ENCODE measurements at regions of chr17 and their contacts with region 1.

Region 1: DNA sequence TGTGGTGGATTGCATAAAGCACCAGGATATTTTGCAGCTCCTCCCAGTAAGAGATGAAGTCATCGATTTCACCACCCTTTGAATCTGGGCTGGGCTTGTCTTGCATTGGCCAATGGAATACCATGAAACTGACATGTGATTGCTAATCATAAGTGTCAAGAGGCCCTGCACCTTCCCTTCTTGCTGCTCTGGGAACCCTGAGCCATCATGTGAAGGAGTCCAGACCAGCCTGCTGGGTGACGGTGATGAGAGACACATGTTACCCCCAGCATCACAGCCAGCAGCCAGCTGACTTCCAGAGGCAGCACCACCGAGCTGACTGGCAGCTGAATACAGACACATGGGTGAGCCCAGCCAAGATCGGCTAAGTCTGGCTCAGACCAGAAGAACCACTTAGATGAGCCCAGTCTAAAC is 43.6 kb upstream of the CACNG4 start:
- DNase-seq: no peak
- ATAC-seq: no peak
- H3K4me3 Mint-ChIP-seq: no peak overlapping the region
- H3K27ac Mint-ChIP-seq: no peak overlapping the region
- H3K4me1 Mint-ChIP-seq: no peaks in the 10 kb centered on the region
- H3K27me3 Mint-ChIP-seq: peaks cover 12% of the 10 kb centered on the region
- CTCF ChIP-seq: no peak

Region 2: DNA sequence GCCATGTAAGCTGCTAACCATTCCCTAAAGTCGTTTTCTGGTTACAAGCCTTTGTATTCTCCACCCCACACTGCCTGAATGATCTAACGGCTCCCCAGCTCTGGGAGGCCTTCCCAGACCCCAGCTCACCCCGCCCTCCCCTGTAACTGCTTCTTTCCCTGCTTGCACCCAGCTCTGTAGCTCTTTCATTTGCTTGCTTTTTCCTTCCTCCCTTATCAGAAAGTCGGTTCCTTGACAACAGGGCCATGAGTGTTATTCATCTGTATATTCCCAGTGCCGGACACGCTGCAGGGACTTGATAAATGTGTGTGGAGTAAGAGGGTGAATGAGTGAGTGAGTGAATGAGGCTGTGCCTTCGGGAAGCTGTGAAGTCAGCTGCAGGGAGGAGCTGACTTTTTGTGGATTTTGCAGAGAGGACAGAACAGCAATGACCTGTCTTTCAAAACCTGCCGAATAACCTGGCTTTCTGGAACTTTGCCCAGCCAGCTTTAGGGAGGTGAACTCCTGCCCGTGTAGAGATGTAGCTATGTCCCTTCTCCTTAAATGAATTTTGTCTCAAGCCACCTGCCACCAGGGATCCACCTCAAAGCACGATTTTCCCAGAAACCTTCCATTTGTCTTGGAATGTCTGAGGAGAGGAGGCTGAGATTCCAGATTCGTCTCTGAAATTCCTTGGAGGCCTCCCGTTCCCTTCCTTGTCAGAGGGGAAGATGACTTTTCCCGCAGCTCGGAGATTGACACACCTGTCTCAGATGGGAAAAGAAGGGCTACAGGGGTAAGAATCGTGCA is 23.6 kb after region 1 on chr17:
- CTCF ChIA-PET with region 1: no interaction called
- POLR2A ChIA-PET with region 1: no interaction called
- intact Hi-C with region 1: loop called (anchors 1 kb)
- DNase-seq: no peak
- ATAC-seq: no peak
- H3K4me3 Mint-ChIP-seq: no peak overlapping the region
- H3K27ac Mint-ChIP-seq: no peak overlapping the region
- H3K4me1 Mint-ChIP-seq: no peaks in the 10 kb centered on the region
- H3K27me3 Mint-ChIP-seq: peaks cover 44% of the 10 kb centered on the region
- CTCF ChIP-seq: no peak